Mammary epithelial cell (primary cell): ENCODE measurements at regions of chr6 and their contacts with region 1.

Region 1: DNA sequence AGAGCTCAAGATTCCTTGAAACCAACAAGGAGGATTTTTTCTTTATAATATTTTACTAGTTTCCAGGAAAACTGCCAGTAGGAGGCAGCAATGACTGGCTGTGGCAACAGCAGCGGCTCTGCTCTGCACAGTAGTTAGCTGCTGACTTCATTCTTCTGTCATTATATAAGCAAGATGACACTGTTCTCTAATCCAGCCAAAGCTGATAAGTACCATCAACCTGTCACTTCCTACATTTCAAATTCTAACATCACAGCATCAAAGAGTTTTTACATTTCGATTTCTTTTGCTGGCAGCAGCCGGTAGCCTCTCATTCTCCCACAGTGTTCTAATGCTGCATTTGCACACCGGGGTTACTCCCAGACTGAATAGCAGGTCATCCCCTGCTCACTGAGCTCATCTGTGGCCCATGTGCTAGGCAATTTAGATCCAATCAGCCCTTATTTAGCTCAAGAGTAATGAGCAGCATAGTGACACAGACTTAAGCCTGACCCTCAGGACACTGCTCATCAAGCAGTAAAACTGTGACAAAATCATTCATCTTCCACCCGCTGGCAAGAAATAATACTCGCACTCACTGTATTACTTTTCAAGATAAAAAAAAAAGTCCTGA is 67.8 kb downstream of the MMS22L start:
- DNase-seq: peak; percentile 8
- H3K4me3 ChIP-seq: no peak overlapping the region
- H3K27ac ChIP-seq: no peak overlapping the region
- H3K4me1 ChIP-seq: no peaks in the 10 kb centered on the region
- H3K27me3 ChIP-seq: no peaks in the 10 kb centered on the region
- CTCF ChIP-seq: peak; percentile 21 to 63

Region 2: GRCh38 chr6:97174471-97174870 is 40.8 kb before region 1 on chr6:
- CTCF ChIA-PET with region 1: interaction called, 11 read pairs
- dilution Hi-C with region 1: no loop called
- in situ Hi-C with region 1: no loop called
- intact Hi-C with region 1: no loop called
- DNase-seq: no peak
- H3K4me3 ChIP-seq: no peak overlapping the region
- H3K27ac ChIP-seq: no peak overlapping the region
- H3K4me1 ChIP-seq: no peaks in the 10 kb centered on the region
- H3K27me3 ChIP-seq: no peaks in the 10 kb centered on the region
- CTCF ChIP-seq: no peak